ENCODE measurements at regions of chr6 and their contacts with region 1.

Region 1: DNA sequence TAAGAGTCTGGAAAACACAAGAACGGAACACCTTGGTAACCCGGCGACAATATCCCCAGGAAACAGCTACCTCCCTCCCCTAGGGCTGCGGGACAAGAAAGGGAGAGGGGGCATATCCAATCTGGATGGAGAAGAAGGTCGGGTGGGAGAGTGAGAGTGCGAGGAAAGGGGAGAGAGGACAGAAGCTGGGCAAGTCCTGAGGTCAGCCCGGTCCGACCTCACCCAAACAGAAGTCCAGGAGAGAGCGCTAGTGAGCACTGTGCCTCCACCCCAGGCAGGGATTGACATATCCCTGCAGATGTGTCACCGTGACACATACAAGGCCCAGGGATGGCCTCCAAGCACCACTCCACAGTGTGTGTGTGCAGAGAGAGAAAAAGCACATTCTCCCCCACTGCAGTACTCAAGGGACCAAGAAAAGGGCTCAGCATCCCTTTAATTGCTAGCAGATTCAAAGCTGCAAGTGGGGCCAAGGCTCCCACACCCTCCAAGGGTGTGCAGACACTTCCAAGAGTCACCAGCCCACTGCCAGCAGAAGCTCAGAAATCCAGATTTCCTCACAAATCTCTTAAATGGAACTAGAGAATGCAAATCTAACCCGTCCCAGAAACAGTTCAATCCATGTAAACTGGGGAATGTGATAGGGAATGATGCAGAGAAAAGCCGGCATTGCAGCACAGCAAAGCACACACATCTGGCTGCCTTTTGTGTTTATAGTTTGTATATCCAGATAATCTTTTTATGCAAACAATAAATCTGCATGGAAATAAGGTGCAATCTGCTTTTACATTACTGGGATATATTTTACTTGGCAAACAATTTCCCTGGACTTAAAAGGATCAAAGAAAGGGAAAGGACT is 3.1 kb downstream of the PXDC1 start:
- DNase-seq: peak; percentile 53
- ATAC-seq: peak; percentile 70
- H3K4me3 ChIP-seq: no peak overlapping the region
- H3K27ac ChIP-seq: no peak overlapping the region
- H3K4me1 ChIP-seq: peaks cover 12 to 50% of the 10 kb centered on the region in 2 experiments; a peak in 3 of 4 replicates
- H3K27me3 ChIP-seq: no peaks in the 10 kb centered on the region
- CTCF ChIP-seq: peak; percentile 77 to 85 (median 84)
- POLR2A ChIP-seq: no peak
- RAD21 ChIP-seq: peak; percentile 81

Region 2: DNA sequence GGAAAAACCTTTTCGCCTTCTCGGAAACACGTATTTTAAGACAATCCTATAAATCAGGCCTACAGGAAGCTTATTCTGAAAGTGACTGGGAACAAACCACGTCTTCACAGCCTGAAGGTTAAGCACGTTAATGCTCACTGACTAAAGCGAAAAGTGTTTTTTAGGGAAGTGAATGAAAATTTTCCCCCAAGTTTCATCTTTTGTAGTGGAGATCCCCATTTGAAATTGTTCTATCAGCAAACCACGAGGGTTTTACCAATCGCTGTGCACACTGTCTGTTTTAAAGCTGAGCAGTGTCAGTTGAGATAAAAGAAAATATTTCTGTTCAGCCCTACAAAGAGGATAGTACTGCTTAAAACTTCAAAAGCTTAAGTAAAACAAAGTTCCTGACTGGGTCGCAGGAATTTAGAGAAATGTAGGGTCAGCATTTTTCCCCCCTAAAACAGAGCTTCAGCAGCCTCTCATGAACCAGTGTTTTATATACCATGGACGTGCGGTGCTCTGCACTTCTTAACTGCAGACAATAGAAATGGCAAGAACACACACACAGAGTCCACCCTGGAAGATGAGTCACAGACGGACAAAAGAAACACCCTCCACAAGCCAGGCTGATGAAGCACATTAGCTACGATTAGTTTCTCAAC is 326.5 kb before region 1 on chr6:
- CTCF ChIA-PET with region 1: no interaction called
- POLR2A ChIA-PET with region 1: no interaction called
- RAD21 ChIA-PET with region 1: no interaction called
- intact Hi-C with region 1: no loop called
- DNase-seq: no peak
- ATAC-seq: no peak
- H3K4me3 ChIP-seq: no peak overlapping the region
- H3K27ac ChIP-seq: no peak overlapping the region
- H3K4me1 ChIP-seq: peaks cover 2 to 20% of the 10 kb centered on the region in 2 experiments; a peak in 2 of 4 replicates
- H3K27me3 ChIP-seq: no peaks in the 10 kb centered on the region
- CTCF ChIP-seq: no peak
- POLR2A ChIP-seq: no peak
- RAD21 ChIP-seq: no peak

Region 3: DNA sequence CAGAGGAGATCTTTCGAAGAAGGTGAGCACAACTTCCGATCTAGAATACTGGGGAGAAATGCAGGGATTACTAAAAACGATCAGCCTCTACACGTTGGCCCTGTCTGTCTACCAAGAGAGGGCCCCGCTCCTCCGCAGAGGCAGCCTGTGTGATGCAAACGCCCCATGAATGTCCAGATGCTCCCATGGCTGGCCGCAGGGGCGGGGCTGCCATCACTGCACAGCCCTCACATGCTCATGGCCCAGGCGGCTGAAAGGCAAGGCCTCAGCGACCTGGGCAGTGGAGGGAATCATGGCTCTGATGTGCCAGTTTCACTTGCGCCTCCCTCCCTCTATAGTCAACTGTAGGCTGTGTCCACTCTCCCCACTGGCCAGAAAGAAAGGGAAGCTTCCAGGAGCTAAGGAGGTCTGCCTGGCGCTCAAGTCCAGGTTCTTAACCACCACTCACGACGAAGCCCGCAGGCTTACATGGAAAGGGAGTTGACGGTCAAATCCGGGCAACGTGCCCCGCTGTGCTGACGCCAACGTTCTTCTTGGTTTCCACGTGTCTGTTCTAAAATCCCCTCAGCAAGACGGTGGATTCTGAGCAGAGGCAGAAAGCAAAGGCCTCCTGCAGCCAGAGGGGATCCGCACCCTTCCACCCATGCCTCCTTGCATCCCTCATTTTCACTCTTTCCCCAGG is 11.1 kb before region 1 on chr6:
- CTCF ChIA-PET with region 1: no interaction called
- POLR2A ChIA-PET with region 1: no interaction called
- RAD21 ChIA-PET with region 1: no interaction called
- intact Hi-C with region 1: no loop called
- DNase-seq: no peak
- ATAC-seq: no peak
- H3K4me3 ChIP-seq: no peak overlapping the region
- H3K27ac ChIP-seq: no peak overlapping the region
- H3K4me1 ChIP-seq: 0 out of 4 replicates have a peak, but pooled peaks cover 0 to 4% of the 10 kb centered on the region in 2 experiments
- H3K27me3 ChIP-seq: no peaks in the 10 kb centered on the region
- CTCF ChIP-seq: no peak
- POLR2A ChIP-seq: no peak
- RAD21 ChIP-seq: no peak

Region 4: DNA sequence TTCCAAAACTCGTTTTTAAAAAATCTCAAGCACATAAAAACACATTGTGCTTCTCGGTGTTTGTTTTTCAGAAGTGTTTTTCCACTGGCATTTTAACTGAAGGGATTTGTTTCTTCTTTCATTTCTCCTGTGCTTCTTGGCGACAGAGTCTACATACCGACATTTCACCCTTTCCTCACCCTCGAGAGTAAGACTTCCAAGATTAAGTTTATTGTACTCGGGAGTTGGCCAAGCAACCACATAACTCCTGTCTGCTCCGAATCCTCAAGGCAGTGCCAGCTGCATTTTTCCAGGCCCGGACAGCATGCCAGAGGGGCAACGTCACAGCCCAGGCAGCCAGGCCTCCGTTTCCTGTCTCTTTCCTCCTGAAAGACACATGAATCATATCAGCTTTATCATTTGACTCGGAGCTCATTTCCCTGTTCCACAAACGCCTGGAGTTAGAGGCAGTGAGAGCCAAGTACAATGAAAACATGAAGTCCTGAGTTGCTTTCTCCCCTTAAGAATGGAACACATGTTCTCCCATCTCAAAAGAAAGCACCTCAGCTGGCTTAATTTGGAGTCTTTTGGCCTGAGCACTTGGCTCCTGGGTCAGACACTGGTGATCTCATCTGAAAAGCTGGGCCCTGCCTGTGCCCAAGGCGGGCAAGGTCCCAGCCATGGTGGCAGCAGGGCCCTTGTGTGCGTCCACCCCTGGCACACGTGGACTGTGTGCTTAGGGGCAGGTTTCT is 77.6 kb after region 1 on chr6:
- CTCF ChIA-PET with region 1: interaction called, 12 read pairs
- POLR2A ChIA-PET with region 1: interaction called, 5 read pairs
- RAD21 ChIA-PET with region 1: no interaction called
- intact Hi-C with region 1: loop called (anchors 1 kb)
- DNase-seq: peak; percentile 81
- ATAC-seq: peak; percentile 90
- H3K4me3 ChIP-seq: peak overlapping the region in 1 of 2 experiments; percentile 32; a peak in 2 of 4 replicates
- H3K27ac ChIP-seq: peak overlapping the region; percentile 75
- H3K4me1 ChIP-seq: peaks cover 15 to 30% of the 10 kb centered on the region in 2 experiments
- H3K27me3 ChIP-seq: no peaks in the 10 kb centered on the region
- CTCF ChIP-seq: no peak
- POLR2A ChIP-seq: no peak
- RAD21 ChIP-seq: peak; percentile 30; the same call in 1 of the 2 replicates

Region 5: DNA sequence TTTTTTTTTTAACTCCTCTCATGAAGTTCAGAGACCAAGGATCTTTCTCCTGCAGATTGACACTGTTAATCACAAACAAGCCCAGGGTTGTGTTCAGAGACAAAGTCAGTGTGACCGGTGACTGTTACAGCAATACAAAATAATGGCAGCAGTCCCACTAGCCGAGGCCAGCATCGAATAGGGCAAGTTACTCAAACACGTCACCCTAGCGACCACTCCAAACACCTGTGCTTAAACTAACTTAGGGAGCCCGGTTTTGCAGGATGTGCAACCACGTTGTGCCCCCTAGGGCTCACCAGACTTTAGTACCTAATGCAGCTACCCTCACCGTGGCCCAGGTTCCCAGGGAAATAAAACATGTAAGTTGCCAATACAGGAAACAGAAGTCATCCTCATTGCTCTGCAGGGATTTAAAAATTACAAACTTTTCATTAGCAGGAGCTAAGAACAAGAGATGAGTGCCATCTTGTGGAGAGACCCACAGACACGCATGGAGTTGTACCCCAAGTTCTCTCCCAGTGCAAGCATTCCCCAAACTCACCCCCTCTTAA is 138.8 kb after region 1 on chr6:
- CTCF ChIA-PET with region 1: interaction called, 7 read pairs
- POLR2A ChIA-PET with region 1: no interaction called
- RAD21 ChIA-PET with region 1: no interaction called
- intact Hi-C with region 1: loop called (anchors 1 kb)
- DNase-seq: no peak
- ATAC-seq: no peak
- H3K4me3 ChIP-seq: no peak overlapping the region
- H3K27ac ChIP-seq: no peak overlapping the region
- H3K4me1 ChIP-seq: 0 out of 4 replicates have a peak, but pooled peaks cover 0 to 5% of the 10 kb centered on the region in 2 experiments
- H3K27me3 ChIP-seq: no peaks in the 10 kb centered on the region
- CTCF ChIP-seq: peak; percentile 26 to 46 (median 39); a peak in 4 of 6 replicates
- POLR2A ChIP-seq: no peak
- RAD21 ChIP-seq: peak; percentile 64

Region 6: DNA sequence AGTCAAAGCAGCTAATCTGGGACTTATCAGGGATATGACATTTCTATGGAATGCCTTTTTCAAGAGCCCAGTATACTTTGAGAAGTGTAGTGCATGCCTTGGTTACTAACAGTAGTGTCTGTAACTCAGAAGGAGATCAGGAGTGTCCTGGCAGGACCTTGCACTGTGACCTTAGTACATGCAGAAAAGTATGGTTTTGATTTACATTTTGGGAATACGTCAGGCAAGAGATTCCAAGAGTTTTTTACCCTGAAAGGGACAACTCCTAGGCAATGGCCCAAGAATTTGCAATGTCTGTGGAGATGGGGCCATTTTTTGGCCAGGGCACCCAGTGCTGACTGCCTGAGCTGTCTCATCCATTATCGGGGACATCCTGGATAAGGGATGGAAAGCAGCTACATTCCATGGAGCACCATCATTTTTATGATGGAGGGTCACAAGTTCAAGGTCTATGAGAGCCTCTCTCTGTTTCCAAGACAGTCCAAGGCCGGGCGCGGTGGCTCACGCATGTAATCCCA is 180.9 kb after region 1 on chr6:
- CTCF ChIA-PET with region 1: interaction called, 31 read pairs
- POLR2A ChIA-PET with region 1: interaction called, 3 read pairs
- RAD21 ChIA-PET with region 1: interaction called, 7 to 8 read pairs
- intact Hi-C with region 1: loop called (anchors 1 kb)
- DNase-seq: no peak
- ATAC-seq: no peak
- H3K4me3 ChIP-seq: no peak overlapping the region
- H3K27ac ChIP-seq: no peak overlapping the region
- H3K4me1 ChIP-seq: peaks cover 0 to 4% of the 10 kb centered on the region in 2 experiments; a peak in 1 of 4 replicates
- H3K27me3 ChIP-seq: no peaks in the 10 kb centered on the region
- CTCF ChIP-seq: no peak
- POLR2A ChIP-seq: no peak
- RAD21 ChIP-seq: no peak

Region 7: GRCh38 chr6:3990692-3991501 is 242.5 kb after region 1 on chr6:
- CTCF ChIA-PET with region 1: interaction called, 15 read pairs
- POLR2A ChIA-PET with region 1: no interaction called
- RAD21 ChIA-PET with region 1: no interaction called
- intact Hi-C with region 1: no loop called
- DNase-seq: peak; percentile 65
- ATAC-seq: peak; percentile 95
- H3K4me3 ChIP-seq: no peak overlapping the region
- H3K27ac ChIP-seq: no peak overlapping the region
- H3K4me1 ChIP-seq: peaks cover 5 to 10% of the 10 kb centered on the region in 2 experiments
- H3K27me3 ChIP-seq: no peaks in the 10 kb centered on the region
- CTCF ChIP-seq: peak; percentile 67 to 94 (median 94)
- POLR2A ChIP-seq: no peak
- RAD21 ChIP-seq: peak; percentile 87

Region 8: DNA sequence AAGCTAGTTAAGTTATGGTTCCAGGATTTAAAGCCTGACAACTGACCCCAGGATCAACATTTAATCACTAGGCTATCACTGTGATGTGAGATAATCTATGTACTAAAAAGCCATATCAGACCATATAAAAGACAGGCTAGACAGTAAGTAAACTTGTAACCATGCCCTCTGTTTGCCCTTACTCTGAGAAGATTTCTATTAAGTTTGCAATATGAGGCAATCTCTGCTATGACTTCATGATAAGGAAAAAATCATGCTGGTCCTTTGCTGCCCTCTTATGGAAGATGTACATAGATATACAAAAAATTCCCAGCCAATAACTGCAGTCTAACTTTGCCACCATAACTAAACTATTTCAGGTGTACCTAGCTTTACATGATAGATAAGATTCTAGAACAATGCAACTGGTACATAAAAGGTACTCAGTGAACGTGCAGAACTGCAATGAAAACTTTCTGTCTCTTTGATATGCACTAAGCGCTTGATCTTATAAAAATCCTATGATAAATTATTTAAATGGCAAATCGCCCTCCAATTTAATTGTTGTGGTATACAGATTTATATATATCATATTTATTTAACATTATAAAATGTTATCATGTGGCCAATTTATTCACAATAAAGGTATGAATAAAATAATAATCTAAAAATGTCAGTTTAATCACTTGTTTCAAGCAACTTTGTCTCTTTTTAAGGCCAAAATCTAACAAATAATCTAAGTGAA is 260.0 kb after region 1 on chr6:
- CTCF ChIA-PET with region 1: interaction called, 12 read pairs
- POLR2A ChIA-PET with region 1: no interaction called
- RAD21 ChIA-PET with region 1: interaction called in 1 of 2 experiments, 3 read pairs
- intact Hi-C with region 1: loop called (anchors 1 kb)
- DNase-seq: peak; percentile 56
- ATAC-seq: peak; percentile 80
- H3K4me3 ChIP-seq: no peak overlapping the region
- H3K27ac ChIP-seq: no peak overlapping the region
- H3K4me1 ChIP-seq: peaks cover 0 to 9% of the 10 kb centered on the region in 2 experiments; a peak in 2 of 4 replicates
- H3K27me3 ChIP-seq: no peaks in the 10 kb centered on the region
- CTCF ChIP-seq: peak; percentile 44 to 62 (median 54); a peak in 4 of 6 replicates
- POLR2A ChIP-seq: no peak
- RAD21 ChIP-seq: peak; percentile 73

Measured in HCT116 (cell line).